AG04450 (cell line): ENCODE measurements at regions of chr6 and their contacts with region 1.

Region 1: GRCh38 chr6:32195652-32195901 is 3.1 kb upstream of the GPSM3 start:
- DNase-seq: peak; percentile 100
- H3K4me3 ChIP-seq: peak overlapping the region; percentile 83
- H3K27ac ChIP-seq: no peak overlapping the region
- H3K27me3 ChIP-seq: no peaks in the 10 kb centered on the region
- CTCF ChIP-seq: peak; percentile 56

Region 2: DNA sequence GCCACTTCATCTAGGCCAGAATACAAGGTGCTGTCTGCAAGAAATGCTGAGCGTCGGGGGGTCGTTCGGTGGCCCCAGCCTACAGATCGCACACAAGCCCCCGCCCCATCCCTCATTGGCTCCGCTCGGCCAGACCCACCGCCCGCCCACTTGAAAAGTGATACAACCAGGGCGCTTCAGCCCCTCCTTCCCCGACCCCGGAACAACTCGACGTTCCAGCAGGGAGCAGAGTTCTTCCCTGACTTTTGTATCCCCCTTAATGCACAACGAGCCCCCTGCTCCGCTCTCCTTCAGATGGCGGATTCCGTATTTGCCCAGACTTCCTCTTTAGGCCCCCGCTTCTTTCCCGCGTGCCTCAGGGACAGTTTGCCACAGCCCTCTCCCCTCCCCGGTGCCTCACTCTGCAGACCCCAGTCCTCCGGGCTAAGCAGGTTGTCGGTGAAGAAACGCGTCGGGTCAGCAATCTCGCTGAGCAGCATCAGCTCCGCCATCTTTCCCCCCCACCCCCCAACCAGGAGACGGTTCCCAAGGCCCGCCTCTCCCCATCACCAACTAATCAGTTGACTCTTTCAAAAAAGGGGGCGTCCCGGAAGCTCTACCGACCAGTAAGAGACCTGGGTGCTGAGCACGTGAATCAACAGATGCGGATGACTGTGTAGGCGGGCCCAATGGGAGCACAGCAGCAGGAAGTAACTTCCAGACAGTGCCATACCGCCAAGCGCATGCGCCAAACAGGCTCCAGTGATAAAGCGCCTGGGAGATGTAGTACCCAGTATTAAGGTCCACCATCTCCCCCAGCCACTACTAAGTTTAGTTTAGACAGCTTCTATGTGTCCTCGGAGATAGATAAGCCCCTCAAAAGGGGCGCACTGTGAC is 67.6 kb before region 1 on chr6 and contains the start of gene ATF6B:
- CTCF ChIA-PET with region 1: interaction called, 10 read pairs
- POLR2A ChIA-PET with region 1: interaction called, 13 read pairs
- DNase-seq: peak; percentile 99
- H3K4me3 ChIP-seq: peak within 1 kb of the TSS; percentile 98
- H3K27ac ChIP-seq: peak within 1 kb of the TSS; percentile 92
- H3K27me3 ChIP-seq: no peaks in the 10 kb centered on the region
- CTCF ChIP-seq: no peak
- polyA plus RNA-seq, gene ATF6B: 39.2 and 60.0 TPM in 2 replicates

Region 3: GRCh38 chr6:32177788-32178546 is 17.6 kb before region 1 on chr6 and contains the start of gene RNF5:
- CTCF ChIA-PET with region 1: interaction called, 13 read pairs
- POLR2A ChIA-PET with region 1: interaction called, 11 read pairs
- DNase-seq: peak; percentile 100
- H3K4me3 ChIP-seq: peak within 1 kb of the TSS; percentile 97
- H3K27ac ChIP-seq: peak within 1 kb of the TSS; percentile 99
- H3K27me3 ChIP-seq: no peaks in the 10 kb centered on the region
- CTCF ChIP-seq: no peak
- polyA plus RNA-seq, gene RNF5: 33.3 TPM in 2 replicates

Region 4: DNA sequence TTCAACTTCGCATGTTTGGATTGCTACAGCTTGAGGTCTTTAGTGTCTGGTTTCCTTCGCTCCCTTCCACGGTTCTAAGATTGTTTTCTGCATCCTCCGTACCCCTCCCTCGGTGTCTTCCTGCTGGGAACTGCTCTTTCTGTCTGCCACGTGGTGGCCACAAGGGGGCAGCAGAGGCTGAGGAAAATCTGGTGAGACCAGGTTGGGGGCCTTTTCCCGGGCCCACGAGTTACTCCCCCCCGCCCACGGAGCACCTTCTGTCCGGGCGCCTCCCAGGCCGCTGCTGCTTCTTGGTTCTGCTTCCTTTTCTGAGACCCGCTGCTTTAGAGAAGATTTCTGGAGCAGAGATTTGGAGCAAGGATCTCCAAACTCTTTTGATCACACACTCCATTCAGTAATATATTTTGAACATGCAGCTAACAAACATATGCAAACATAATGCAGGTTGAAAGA is 49.4 kb after region 1 on chr6:
- CTCF ChIA-PET with region 1: interaction called, 18 read pairs
- POLR2A ChIA-PET with region 1: no interaction called
- DNase-seq: peak; percentile 39
- H3K4me3 ChIP-seq: no peak overlapping the region
- H3K27ac ChIP-seq: no peak overlapping the region
- H3K27me3 ChIP-seq: peaks cover 24% of the 10 kb centered on the region
- CTCF ChIP-seq: peak; percentile 82

Region 5: DNA sequence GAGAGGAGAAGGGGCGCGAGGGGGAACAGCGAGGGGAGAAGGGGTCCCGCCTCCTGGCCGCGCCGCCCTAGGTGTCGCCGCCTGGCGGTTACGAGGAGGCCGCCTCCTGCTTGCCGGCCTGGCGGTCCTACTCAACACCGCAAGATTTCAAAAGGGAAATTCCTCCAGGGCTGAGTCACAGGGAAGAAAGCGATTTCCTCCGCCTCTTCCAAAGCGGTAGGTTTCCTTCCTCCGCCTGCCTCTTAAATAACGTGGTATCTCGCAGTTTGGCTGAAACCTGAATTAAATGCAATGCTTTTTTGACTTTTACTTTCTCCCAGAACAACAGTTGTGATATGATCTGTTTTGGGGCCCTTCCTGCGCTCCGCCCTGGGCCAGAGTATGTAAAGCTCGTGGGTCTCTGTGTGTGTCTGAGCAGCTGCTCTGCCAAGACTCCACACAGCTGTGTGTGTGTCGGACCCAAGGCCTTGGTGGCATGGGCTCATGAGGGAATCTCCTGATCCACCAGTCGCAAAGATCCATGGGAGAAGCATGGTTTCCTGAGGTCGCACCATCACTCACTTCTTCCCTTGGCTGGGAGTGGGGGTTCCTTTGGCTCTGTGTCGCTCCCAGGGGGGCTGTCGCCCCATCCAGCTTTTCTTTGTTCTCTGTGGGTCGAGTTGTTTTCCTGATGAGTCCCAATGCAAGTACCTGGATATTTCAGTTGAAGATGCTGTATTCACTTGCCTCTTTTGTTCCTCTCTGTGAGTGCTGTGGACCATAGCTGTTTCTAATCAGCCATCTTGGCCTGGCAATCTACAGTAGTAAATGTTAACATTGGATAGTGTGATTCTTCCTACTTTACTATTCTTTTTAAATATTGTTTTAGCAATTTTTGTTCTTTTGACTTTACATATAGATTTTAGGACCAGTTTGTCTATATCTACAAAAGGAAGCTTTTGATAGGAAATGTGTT is 59.9 kb after region 1 on chr6:
- CTCF ChIA-PET with region 1: interaction called, 13 read pairs
- POLR2A ChIA-PET with region 1: interaction called, 11 read pairs
- DNase-seq: peak; percentile 81
- H3K4me3 ChIP-seq: peak overlapping the region; percentile 56
- H3K27ac ChIP-seq: peak overlapping the region; percentile 97
- H3K27me3 ChIP-seq: peaks cover 2% of the 10 kb centered on the region
- CTCF ChIP-seq: peak; percentile 69